Posterior cingulate gyrus (tissue), 11 donors: ENCODE measurements at regions of chr12 and their contacts with region 1.

Region 1: DNA sequence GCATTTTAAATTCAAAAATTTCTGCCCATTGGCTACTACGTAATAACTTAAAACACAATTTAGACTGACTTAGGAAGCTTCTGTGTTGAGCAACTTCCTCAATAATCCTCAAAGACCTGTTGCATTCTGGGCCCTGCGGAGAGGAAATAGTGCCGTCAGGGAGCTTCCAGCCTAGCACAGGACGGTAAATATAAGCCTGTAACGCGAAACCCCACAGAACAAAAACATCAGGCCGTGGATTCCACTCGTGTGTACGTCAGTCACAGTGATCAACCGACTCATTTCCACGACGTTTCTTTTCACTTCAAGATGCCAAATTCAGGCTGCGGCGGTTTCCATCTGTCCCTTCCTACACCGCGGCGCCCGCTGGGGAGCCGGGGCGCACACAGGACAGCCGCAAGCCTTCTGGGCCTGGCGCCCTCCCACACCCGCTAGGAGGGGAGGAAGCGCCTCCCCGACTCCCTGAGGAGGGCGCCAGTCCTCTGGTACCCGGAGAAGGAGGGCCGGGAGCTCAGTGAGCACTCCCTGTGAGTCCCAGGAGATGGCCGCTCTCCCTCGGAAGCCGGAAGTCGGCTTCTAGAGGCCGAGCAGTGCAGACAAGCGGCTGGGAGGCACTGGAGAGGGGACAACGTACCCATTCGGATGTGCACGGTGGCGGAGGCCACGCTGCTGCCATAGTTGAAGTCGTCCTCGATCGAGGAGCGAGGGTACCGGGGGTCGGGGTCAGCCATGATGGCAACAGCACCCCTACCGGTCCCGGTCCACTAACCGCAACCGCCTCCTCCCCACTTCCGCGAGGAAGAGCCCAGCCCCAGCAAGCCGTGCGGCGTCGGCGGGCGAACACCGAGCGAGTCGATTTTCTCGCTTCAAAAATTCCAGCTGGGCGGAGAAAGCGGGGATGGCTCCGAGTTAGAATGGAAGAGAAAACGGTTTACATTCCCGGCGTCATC is at the start of gene TMBIM4:
- DNase-seq: peak; percentile 66 to 97 (median 82)

Region 2: GRCh38 chr12:66130277-66131066 is 39.0 kb before region 1 on chr12 and contains the start of gene LLPH:
- intact Hi-C with region 1: loop called (anchors 1 kb)
- DNase-seq: peak; percentile 79 to 98 (median 88)

Region 3: GRCh38 chr12:66301944-66302826 is 132.7 kb after region 1 on chr12 and contains the start of gene HELB:
- intact Hi-C with region 1: loop called (anchors 5 kb)
- DNase-seq: peak; percentile 86 to 98 (median 92)